Activated CD4-positive, alpha-beta T cell treated with anti-CD3 and anti-CD28 coated beads, Interleukin-2, amount 10 ng/mL, durations not matched to agents 7 days and 5 days (primary cell): ENCODE measurements at regions of chr3 and their contacts with region 1.

Region 1: DNA sequence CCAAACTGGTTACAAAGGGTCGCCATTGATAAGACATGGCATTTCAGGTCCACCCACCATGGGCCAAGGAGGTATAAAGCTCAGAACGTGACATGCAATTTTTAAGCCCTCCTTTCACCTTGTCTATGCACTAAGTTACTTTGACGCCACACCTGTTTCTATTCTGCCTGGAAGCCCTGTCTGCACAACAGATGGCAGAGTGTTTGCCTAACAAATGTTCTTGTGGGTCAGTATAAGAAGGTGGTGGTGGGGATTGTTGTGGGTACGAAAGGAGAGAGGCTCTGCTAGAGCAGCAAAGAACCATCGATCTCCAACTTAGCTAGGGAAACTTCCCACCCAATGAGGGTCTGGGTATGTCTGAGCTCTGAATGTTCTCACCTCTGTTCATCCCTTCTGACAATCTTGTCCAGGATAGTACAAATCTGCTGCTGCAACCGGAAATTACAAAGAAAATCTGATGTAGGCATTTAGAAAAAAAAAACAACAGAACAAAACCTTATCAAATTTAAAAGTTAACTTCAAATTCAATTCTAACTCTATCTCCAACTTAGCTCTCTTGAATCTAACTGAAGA is 945.0 kb upstream of the CFAP20DC start:
- DNase-seq: no peak
- H3K4me3 Mint-ChIP-seq: no peak overlapping the region
- H3K27ac Mint-ChIP-seq: peak overlapping the region; percentile 68
- H3K4me1 Mint-ChIP-seq: peaks cover 66% of the 10 kb centered on the region
- H3K27me3 Mint-ChIP-seq: no peaks in the 10 kb centered on the region

Region 2: GRCh38 chr3:59970376-59970775 is 24.4 kb before region 1 on chr3:
- CTCF ChIA-PET with region 1: no interaction called
- POLR2A ChIA-PET with region 1: no interaction called
- DNase-seq: no peak
- H3K4me3 Mint-ChIP-seq: no peak overlapping the region
- H3K27ac Mint-ChIP-seq: no peak overlapping the region
- H3K4me1 Mint-ChIP-seq: peaks cover 1% of the 10 kb centered on the region
- H3K27me3 Mint-ChIP-seq: no peaks in the 10 kb centered on the region

Region 3: DNA sequence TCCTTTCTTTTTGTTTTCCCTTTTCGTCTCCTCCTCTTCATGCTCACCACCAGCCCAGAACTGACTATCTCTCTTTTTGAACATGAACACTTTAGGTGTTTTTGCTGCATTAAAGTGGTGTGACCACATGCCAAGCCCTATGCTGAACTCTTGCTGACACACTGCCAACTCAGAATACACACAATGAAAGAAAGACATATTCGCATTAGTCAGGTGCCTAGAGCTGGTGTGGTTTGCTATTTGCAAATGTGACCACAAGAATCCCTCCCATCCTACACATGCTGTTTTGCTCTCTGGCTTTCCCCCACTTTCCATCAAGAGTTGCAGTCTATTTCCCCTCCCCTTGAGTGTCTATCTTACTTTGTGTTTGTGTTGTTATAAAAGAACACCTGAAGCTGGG is 22.8 kb after region 1 on chr3:
- CTCF ChIA-PET with region 1: no interaction called
- POLR2A ChIA-PET with region 1: interaction called, 11 read pairs
- DNase-seq: peak; percentile 67
- H3K4me3 Mint-ChIP-seq: peak overlapping the region; percentile 20
- H3K27ac Mint-ChIP-seq: peak overlapping the region; percentile 93
- H3K4me1 Mint-ChIP-seq: peaks cover 59% of the 10 kb centered on the region
- H3K27me3 Mint-ChIP-seq: no peaks in the 10 kb centered on the region